ENCODE measurements at regions of chr15 and their contacts with region 1.

Region 1: GRCh38 chr15:48877630-48878595 is at the start of gene EID1:
- DNase-seq: peak; percentile 86 to 96 (median 88)
- ATAC-seq: peak; percentile 93
- H3K4me3 ChIP-seq: peak within 1 kb of the TSS; percentile 56
- H3K27ac ChIP-seq: peak within 1 kb of the TSS; percentile 73
- H3K4me1 ChIP-seq: peaks cover 6 to 26% of the 10 kb centered on the region in 2 experiments; a peak in 3 of 5 replicates
- H3K27me3 ChIP-seq: no peaks in the 10 kb centered on the region
- CTCF ChIP-seq: 0 out of 6 replicates have a peak, but pooled peaks of 1 of the 3 experiments have one; percentile 25
- EP300 ChIP-seq: no peak; the same call in 1 of the 2 replicates
- POLR2A ChIP-seq: peak; percentile 90
- RAD21 ChIP-seq: no peak; a peak in 1 of 4 replicates
- polyA plus RNA-seq, gene EID1: 46.5 to 51.2 TPM

Region 2: GRCh38 chr15:48730506-48730905 is 147.4 kb before region 1 on chr15:
- CTCF ChIA-PET with region 1: no interaction called
- POLR2A ChIA-PET with region 1: no interaction called
- in situ Hi-C with region 1: no loop called
- intact Hi-C with region 1: no loop called
- DNase-seq: no peak
- ATAC-seq: no peak
- H3K4me3 ChIP-seq: no peak overlapping the region
- H3K27ac ChIP-seq: no peak overlapping the region
- H3K4me1 ChIP-seq: no peaks in the 10 kb centered on the region; a peak in 1 of 5 replicates
- H3K27me3 ChIP-seq: no peaks in the 10 kb centered on the region
- CTCF ChIP-seq: no peak
- EP300 ChIP-seq: no peak
- POLR2A ChIP-seq: no peak
- RAD21 ChIP-seq: no peak

Region 3: DNA sequence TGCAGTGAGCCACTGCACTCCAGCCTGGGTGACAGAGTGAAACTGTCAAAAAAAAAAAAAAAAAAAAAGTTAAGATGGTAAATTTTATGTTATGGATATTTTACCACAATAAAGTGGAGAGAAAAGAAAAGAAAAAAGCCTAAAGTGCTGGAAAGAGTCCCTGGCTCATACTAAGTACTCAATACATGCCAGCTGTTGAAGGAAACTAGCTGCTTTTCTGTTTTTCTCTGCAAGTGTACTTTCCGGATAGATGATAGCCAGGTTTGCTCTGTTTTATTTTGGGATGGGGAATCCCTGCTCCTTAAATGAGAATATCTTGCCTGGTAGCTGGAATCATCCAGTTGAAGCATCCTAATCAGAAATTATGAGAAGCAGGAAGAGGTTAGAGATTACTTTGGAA is 10.9 kb after region 1 on chr15:
- CTCF ChIA-PET with region 1: no interaction called
- POLR2A ChIA-PET with region 1: interaction called, 15 read pairs
- in situ Hi-C with region 1: no loop called
- intact Hi-C with region 1: no loop called
- DNase-seq: no peak
- ATAC-seq: no peak
- H3K4me3 ChIP-seq: no peak overlapping the region
- H3K27ac ChIP-seq: no peak overlapping the region
- H3K4me1 ChIP-seq: peaks cover 0 to 14% of the 10 kb centered on the region in 2 experiments; a peak in 2 of 5 replicates
- H3K27me3 ChIP-seq: no peaks in the 10 kb centered on the region
- CTCF ChIP-seq: no peak
- EP300 ChIP-seq: no peak
- POLR2A ChIP-seq: no peak
- RAD21 ChIP-seq: no peak

Region 4: DNA sequence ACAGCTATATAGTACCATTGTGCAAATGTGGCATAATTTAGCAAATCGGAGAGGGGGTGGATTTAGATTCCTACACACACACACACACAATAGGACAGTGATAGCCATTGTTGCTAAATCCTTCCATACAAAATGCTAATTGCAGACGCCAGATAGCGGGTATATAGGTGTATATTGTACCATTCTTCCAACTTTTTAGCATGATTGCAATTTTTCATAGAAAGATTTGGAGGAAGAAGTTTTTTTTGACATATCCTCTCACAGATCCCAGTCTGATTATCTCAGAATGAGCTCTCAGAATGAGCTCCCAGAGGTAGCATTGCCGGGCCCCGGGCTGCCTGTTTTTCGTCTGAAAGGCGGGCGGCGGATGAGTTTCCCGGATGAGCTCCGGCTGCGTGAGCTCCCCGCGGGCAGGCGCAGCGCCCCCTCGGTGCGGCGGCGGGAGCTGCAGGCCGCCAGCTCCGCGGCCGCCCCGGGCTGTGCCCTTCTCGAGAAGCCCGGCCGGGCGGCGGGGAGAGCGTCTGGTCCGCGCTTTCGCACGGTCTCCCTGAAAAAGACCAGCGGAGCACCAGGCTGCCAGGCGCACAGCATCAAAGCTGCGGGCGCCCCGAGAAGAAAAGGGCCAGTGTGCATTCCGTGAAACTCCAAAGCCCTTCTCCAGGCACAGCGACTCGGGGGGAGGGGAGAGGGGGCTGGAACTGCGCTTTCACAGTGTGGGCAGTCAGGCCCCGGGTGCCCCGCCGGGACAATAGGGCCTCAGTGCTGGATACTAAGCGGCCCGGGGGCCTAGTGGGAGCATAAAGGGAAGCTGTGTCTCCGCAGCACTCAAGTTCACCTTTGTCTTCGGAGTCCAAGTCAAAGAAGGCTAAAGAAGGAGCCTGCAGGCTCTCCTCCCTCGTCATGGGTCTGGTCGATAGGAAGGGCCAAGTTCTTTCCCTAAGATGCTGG is 97.8 kb after region 1 on chr15:
- CTCF ChIA-PET with region 1: no interaction called
- POLR2A ChIA-PET with region 1: no interaction called
- in situ Hi-C with region 1: no loop called
- intact Hi-C with region 1: no loop called
- DNase-seq: peak; percentile 81 to 89 (median 84)
- ATAC-seq: peak; percentile 97
- H3K4me3 ChIP-seq: peak overlapping the region; percentile 45
- H3K27ac ChIP-seq: peak overlapping the region; percentile 59
- H3K4me1 ChIP-seq: peaks cover 12 to 18% of the 10 kb centered on the region in 2 experiments; a peak in 3 of 5 replicates
- H3K27me3 ChIP-seq: no peaks in the 10 kb centered on the region
- CTCF ChIP-seq: peak; percentile 81 to 92 (median 86)
- EP300 ChIP-seq: no peak
- POLR2A ChIP-seq: peak; percentile 59; the same call in 1 of the 2 replicates
- RAD21 ChIP-seq: peak; percentile 52 to 62